Activated T-helper 1 cell treated with anti-CD3 and anti-CD28 coated beads, Interleukin-12 subunit alpha, Interleukin-12 subunit beta, Interleukin-2, Interleukin-4 antibody, amounts not matched to agents 30 ng/mL and 10 ng/mL and 1 ng/mL, durations not matched to agents 14 hours and 24 hours and 36 hours (primary cell): ENCODE measurements at regions of chr17 and their contacts with region 1.

Region 1: DNA sequence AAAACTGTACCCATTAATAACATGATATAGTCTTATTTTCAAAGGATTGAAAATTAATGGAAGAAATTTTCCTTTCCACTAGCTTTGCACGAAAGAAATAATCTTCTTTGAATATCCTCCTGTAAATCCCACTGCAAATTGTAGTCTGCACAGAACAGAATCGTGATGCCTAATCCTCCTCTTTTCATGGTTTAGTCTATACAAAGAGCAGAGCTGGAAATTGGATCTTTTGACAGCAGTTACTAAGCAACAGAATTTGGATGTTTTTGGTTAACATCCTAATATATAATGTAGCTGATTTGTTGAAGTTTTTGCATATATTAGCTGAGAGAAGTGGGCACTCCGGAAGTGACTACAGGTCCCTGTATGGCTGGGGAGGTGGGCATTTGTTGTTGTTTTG is 98.6 kb downstream of the WNT3 start:
- DNase-seq: no peak
- H3K4me3 Mint-ChIP-seq: no peak overlapping the region
- H3K27ac Mint-ChIP-seq: no peak overlapping the region
- H3K4me1 Mint-ChIP-seq: no peaks in the 10 kb centered on the region
- H3K27me3 Mint-ChIP-seq: no peaks in the 10 kb centered on the region

Region 2: GRCh38 chr17:47077576-47077975 is 357.7 kb after region 1 on chr17:
- intact Hi-C with region 1: loop called (anchors 5 kb)
- DNase-seq: no peak
- H3K4me3 Mint-ChIP-seq: no peak overlapping the region
- H3K27ac Mint-ChIP-seq: no peak overlapping the region
- H3K4me1 Mint-ChIP-seq: peaks cover 18% of the 10 kb centered on the region
- H3K27me3 Mint-ChIP-seq: no peaks in the 10 kb centered on the region